Spleen (tissue), 13 donors: ENCODE measurements at regions of chr3 and their contacts with region 1.

Region 1: DNA sequence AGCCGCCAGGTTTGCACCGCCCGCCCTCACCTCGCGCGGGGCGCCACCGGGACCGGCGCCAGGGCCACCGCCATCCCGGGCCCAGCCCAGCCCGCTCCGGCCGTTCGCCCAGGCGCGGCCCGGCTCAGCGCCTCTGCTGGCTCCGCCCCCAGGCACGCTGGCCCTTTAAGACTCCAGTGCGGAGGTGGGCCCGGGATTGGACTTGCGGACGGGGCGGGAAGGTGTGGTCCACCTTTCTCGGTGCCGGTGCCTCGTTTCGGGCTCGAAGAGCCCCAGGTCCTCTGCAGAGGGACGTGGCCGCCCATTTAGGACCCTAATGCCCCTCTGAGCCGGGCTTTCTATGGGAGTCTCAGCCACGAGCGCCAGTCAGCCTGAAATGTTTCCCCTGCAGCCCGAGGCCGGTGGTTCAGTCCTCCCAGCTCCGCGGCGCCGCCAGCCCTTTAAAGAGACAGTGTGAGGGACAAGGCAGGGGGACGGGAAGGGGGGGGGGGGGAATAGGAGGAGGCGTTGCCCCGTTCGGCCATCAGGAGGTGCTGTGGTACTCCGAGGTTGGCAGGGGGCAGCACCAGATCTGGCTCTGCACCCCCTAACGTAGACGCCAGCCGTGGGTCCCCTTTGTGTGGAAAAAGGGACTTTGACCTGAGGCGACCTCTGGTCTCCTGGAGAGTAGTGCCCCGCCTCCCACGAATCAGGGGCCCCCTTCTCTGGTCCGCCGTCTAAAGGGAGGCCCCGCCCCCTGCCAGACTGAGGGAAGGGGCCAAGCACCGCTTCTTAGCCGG is 1.0 kb downstream of the HYAL2 start:
- DNase-seq: peak; percentile 96
- H3K4me3 ChIP-seq: peak overlapping the region; percentile 72 to 97 (median 90)
- H3K27ac ChIP-seq: peak overlapping the region; percentile 86 to 96 (median 93)
- H3K4me1 ChIP-seq: peaks cover 30 to 93% (median 89%) of the 10 kb centered on the region in 6 donors
- H3K27me3 ChIP-seq: no peaks in the 10 kb centered on the region
- CTCF ChIP-seq: peak; percentile 27 to 85 (median 62)
- POLR2A ChIP-seq: peak in 1 of 3 donors; percentile 5

Region 2: GRCh38 chr3:50235716-50236496 is 85.6 kb before region 1 on chr3 and contains the start of gene GNAI2:
- intact Hi-C with region 1: loop called (anchors 10 kb)
- DNase-seq: peak; percentile 100
- H3K4me3 ChIP-seq: peak within 1 kb of the TSS; percentile 87 to 98 (median 92)
- H3K27ac ChIP-seq: peak within 1 kb of the TSS; percentile 94 to 99 (median 96)
- H3K4me1 ChIP-seq: peaks cover 31 to 64% (median 47%) of the 10 kb centered on the region in 6 donors
- H3K27me3 ChIP-seq: no peaks in the 10 kb centered on the region
- CTCF ChIP-seq: peak in 3 of 11 experiments; percentile 37 to 61 (median 43)
- POLR2A ChIP-seq: peak in 2 of 3 donors; percentile 91 to 97
- total RNA-seq, gene GNAI2: 276 to 466 (median 385) TPM

Region 3: DNA sequence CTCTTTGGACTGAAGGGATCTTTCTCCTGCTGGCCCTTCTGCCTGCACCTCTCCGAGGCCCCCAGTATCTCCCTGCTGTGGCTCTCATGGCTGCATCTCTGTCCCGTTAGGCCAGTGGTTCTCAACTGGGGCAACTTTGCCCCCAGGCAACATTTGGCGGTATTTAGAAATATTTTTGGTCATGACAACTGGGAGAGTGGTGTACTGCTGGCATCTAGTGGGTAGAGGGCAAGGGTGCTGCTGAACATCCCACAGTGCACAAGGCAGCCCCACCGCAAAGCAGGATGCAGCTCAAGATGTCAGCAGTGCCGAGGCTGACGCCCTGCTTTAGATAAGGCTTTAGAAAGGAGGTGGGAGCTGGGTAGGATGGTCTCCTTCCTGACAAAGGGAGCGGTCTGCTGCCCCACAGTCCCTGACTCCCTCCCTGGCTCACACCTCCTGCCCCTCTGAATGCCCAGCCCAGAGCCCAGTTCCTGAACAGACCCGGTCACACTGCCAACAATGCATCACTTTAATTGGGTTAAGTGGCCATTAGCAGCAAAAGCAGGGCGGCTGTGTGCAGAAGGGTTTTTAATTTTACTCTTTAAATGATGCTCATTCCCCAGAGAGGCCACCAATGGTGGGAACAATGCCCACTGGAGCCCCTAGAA is 106.6 kb after region 1 on chr3:
- intact Hi-C with region 1: no loop called
- DNase-seq: no peak
- H3K4me3 ChIP-seq: no peak overlapping the region
- H3K27ac ChIP-seq: peak overlapping the region in 3 of 8 donors; percentile 7 to 54 (median 21)
- H3K4me1 ChIP-seq: peaks cover 0 to 13% (median 0%) of the 10 kb centered on the region in 6 donors
- H3K27me3 ChIP-seq: peaks cover 0 to 8% (median 0%) of the 10 kb centered on the region in 7 donors
- CTCF ChIP-seq: peak in 3 of 11 experiments; percentile 13 to 45 (median 32)
- POLR2A ChIP-seq: no peak